ENCODE measurements at regions of chr17 and their contacts with region 1.

Region 1: DNA sequence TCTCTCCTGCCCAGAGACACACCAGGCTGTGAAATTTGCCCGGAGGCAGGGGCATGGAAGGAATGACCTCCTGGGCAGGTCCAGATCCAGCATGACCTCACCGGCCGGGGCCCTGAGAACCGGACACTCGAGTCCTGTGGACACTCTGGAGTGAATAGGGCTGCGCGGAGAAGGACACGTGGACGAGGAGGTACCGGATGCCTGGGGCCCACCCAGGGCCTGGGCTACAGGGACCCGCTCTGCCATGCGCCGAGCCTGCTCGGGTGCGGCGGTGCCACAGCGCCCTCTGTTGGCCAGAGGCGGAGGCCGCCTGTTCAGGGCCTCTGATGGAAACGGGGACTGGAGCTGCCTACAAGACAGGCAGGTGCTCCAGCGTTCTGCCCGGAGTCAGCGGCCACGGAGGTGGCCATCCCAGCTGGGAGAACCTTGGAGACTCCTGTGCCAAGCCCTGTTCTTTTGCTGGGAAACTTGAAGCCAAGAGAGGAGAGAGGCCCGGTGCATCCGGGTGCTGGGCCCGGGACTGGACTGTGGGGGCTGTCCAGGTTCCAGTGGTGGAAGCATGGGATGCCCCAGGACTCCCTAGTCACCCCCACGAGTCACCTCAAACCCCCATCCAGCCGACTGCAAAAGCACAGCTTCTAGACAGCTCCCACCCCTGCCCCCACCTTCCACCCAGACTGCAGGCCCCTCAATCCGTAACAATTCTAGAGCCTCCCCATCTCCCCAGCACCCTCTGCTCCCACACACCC is 19.3 kb upstream of the NXPH3 start:
- DNase-seq: peak in 1 of 2 experiments; percentile 98
- H3K4me3 ChIP-seq: peak overlapping the region in 1 of 4 experiments; percentile 15; a peak in 1 of 8 replicates
- H3K27ac ChIP-seq: no peak overlapping the region
- H3K4me1 ChIP-seq: no peaks in the 10 kb centered on the region
- H3K27me3 ChIP-seq: peaks cover 0 to 3% (median 1%) of the 10 kb centered on the region in 4 experiments; a peak in 2 of 7 replicates
- CTCF ChIP-seq: peak; percentile 94 to 98 (median 98)
- EP300 ChIP-seq: peak in 1 of 2 experiments; percentile 36; a peak in 1 of 3 replicates
- POLR2A ChIP-seq: no peak
- RAD21 ChIP-seq: peak; percentile 97 to 99

Region 2: DNA sequence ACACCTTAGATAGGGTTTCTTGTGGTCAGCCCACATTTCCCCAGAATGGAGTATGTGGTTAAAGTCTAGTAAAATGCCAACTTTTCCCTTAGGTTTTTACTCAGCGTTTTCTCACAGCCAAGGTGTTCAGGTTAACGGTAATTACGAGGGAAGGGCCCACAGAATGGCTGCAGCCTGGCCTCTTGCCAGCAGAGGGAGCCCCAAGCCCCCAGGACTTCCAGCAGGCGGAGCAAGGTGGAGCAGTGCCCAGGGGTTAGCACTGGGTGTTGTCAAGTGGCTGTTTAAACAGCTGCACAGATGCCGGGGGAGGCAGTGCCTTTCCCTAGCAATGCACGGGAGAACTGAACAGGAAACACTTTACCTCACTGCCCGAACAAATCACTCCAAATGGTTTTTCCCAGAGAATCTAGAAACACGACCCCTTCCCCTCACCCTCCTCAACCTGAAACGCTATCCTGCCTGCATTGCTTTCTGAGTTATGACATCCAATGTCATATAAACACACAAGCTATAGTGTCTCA is 148.4 kb before region 1 on chr17:
- CTCF ChIA-PET with region 1: interaction called, 138 read pairs
- POLR2A ChIA-PET with region 1: interaction called, 5 read pairs
- DNase-seq: peak; percentile 70 to 97
- H3K4me3 ChIP-seq: no peak overlapping the region
- H3K27ac ChIP-seq: no peak overlapping the region
- H3K4me1 ChIP-seq: no peaks in the 10 kb centered on the region
- H3K27me3 ChIP-seq: no peaks in the 10 kb centered on the region
- CTCF ChIP-seq: peak; percentile 95 to 99 (median 99)
- EP300 ChIP-seq: 0 out of 3 replicates have a peak, but pooled peaks of 1 of the 2 experiments have one; percentile 7
- POLR2A ChIP-seq: no peak
- RAD21 ChIP-seq: peak; percentile 95 to 98

Region 3: DNA sequence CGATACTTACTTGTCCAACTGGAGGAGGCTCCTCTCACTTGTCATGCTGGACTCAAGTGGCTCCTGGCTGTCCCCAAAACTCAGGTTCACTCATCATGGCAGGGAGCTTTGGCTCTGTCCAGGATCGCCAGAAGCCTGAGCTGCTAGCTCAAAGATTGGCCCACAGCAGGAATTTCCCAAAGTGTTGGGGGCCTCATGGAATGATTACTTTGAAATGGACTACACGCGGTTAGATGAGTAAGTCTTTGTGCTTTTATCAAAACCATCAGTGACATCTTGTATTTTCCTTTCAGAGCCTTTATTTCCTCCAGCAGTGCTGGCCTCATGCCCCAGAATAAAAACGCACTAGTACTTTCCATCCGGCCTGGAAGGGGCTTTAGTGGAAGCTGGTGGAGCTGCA is 112.5 kb before region 1 on chr17:
- CTCF ChIA-PET with region 1: interaction called, 146 read pairs
- POLR2A ChIA-PET with region 1: no interaction called
- DNase-seq: no peak
- H3K4me3 ChIP-seq: no peak overlapping the region
- H3K27ac ChIP-seq: no peak overlapping the region
- H3K4me1 ChIP-seq: peaks cover 0 to 11% (median 7%) of the 10 kb centered on the region in 4 experiments; a peak in 5 of 7 replicates
- H3K27me3 ChIP-seq: peaks cover 0 to 8% (median 0%) of the 10 kb centered on the region in 4 experiments; a peak in 3 of 7 replicates
- CTCF ChIP-seq: no peak
- EP300 ChIP-seq: no peak
- POLR2A ChIP-seq: no peak
- RAD21 ChIP-seq: no peak

Region 4: GRCh38 chr17:49496183-49496866 is 60.1 kb before region 1 on chr17:
- CTCF ChIA-PET with region 1: interaction called, 62 read pairs
- POLR2A ChIA-PET with region 1: interaction called, 4 read pairs
- DNase-seq: peak in 1 of 2 experiments; percentile 98
- H3K4me3 ChIP-seq: peak overlapping the region; percentile 57 to 79 (median 72)
- H3K27ac ChIP-seq: no peak overlapping the region
- H3K4me1 ChIP-seq: peaks cover 3 to 11% (median 7%) of the 10 kb centered on the region in 4 experiments
- H3K27me3 ChIP-seq: peaks cover 12 to 47% (median 38%) of the 10 kb centered on the region in 4 experiments
- CTCF ChIP-seq: peak; percentile 81 to 94 (median 85)
- EP300 ChIP-seq: peak in 1 of 2 experiments; percentile 20; a peak in 1 of 3 replicates
- POLR2A ChIP-seq: no peak
- RAD21 ChIP-seq: peak; percentile 42 to 67

Region 5: GRCh38 chr17:49567871-49568694 is 11.7 kb after region 1 on chr17:
- CTCF ChIA-PET with region 1: interaction called, 62 read pairs
- POLR2A ChIA-PET with region 1: interaction called, 5 read pairs
- DNase-seq: peak in 1 of 2 experiments; percentile 96
- H3K4me3 ChIP-seq: peak overlapping the region in 2 of 4 experiments; percentile 11 to 51; a peak in 4 of 8 replicates
- H3K27ac ChIP-seq: no peak overlapping the region
- H3K4me1 ChIP-seq: peaks cover 0 to 9% (median 2%) of the 10 kb centered on the region in 4 experiments; a peak in 3 of 7 replicates
- H3K27me3 ChIP-seq: peaks cover 0 to 5% (median 2%) of the 10 kb centered on the region in 4 experiments; a peak in 4 of 7 replicates
- CTCF ChIP-seq: peak; percentile 87 to 98 (median 90)
- EP300 ChIP-seq: no peak
- POLR2A ChIP-seq: no peak
- RAD21 ChIP-seq: peak; percentile 97 to 99

Region 6: DNA sequence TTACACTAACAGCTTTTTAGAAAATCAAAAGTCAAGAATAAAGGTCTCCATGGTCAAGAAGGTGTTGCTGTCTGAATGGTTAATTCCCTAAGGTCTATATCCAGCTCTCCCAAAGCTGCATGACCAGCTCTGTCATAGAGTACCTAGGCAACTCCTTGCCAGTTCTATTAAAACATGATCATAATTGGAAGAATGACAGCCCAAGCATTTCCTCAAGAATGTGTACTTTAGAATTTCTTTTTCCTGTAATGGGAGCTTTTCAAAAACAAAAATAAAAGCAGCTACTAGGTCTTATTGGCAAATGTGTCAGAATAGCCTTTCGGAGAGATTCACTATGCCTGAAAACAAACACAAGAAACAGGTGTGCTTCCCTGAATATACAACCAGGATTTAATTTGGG is 113.6 kb after region 1 on chr17:
- CTCF ChIA-PET with region 1: no interaction called
- POLR2A ChIA-PET with region 1: no interaction called
- DNase-seq: no peak
- H3K4me3 ChIP-seq: no peak overlapping the region
- H3K27ac ChIP-seq: no peak overlapping the region
- H3K4me1 ChIP-seq: no peaks in the 10 kb centered on the region
- H3K27me3 ChIP-seq: no peaks in the 10 kb centered on the region
- CTCF ChIP-seq: no peak
- EP300 ChIP-seq: no peak
- POLR2A ChIP-seq: no peak
- RAD21 ChIP-seq: no peak

Region 7: GRCh38 chr17:49694847-49695683 is 138.7 kb after region 1 on chr17:
- CTCF ChIA-PET with region 1: interaction called, 228 read pairs
- POLR2A ChIA-PET with region 1: no interaction called
- DNase-seq: peak in 1 of 2 experiments; percentile 90
- H3K4me3 ChIP-seq: peak overlapping the region in 1 of 4 experiments; percentile 2; a peak in 1 of 8 replicates
- H3K27ac ChIP-seq: no peak overlapping the region
- H3K4me1 ChIP-seq: peaks cover 0 to 2% (median under 1%) of the 10 kb centered on the region in 4 experiments; a peak in 4 of 7 replicates
- H3K27me3 ChIP-seq: no peaks in the 10 kb centered on the region; a peak in 1 of 7 replicates
- CTCF ChIP-seq: peak; percentile 60 to 90 (median 79)
- EP300 ChIP-seq: no peak
- POLR2A ChIP-seq: no peak
- RAD21 ChIP-seq: peak; percentile 91 to 97

Region 8: DNA sequence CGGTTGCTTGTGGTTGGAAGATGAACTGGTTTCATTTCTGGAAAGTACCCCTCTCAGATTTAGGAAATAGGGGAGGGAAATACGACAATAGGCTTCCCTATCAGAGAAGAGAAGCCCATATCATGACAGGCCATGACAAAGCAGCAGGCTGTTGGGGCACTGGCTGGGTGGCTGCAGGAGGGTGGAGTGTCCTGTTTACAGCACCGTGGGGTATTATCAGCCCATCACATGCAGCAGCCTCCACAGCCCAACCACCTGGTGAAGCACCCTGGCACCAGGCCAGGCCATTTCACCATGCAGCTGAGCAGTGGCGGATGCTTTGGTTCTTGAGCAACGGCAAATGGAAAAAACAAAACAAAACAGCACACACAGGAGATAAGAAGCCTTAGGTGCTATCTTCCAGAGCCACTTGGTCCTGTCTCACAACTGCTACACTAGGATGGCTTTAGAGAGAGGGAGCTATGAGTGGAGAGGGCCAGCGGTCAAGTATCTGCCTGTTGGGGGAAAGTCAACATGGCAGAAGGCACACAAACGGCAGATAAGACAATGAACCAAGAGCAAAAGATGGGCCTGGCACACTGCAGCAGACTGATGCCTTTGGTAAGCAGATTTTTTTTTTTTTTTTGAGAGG is 183.4 kb after region 1 on chr17:
- CTCF ChIA-PET with region 1: no interaction called
- POLR2A ChIA-PET with region 1: no interaction called
- DNase-seq: no peak
- H3K4me3 ChIP-seq: no peak overlapping the region
- H3K27ac ChIP-seq: no peak overlapping the region
- H3K4me1 ChIP-seq: no peaks in the 10 kb centered on the region
- H3K27me3 ChIP-seq: no peaks in the 10 kb centered on the region
- CTCF ChIP-seq: no peak
- EP300 ChIP-seq: no peak
- POLR2A ChIP-seq: no peak
- RAD21 ChIP-seq: no peak

Measured in H1 (cell line).